ENCODE measurements at regions of chr10 and their contacts with region 1.

Region 1: GRCh38 chr10:101840741-101841453 is 2.7 kb downstream of the KCNIP2 start:
- DNase-seq: peak; percentile 87
- ATAC-seq: peak; percentile 72

Region 2: GRCh38 chr10:101453791-101454718 is 386.8 kb before region 1 on chr10:
- intact Hi-C with region 1: no loop called
- DNase-seq: no peak
- ATAC-seq: no peak

Region 3: GRCh38 chr10:101782811-101783735 is 57.8 kb before region 1 on chr10 and contains the start of gene NPM3:
- intact Hi-C with region 1: no loop called
- DNase-seq: peak; percentile 88
- ATAC-seq: peak; percentile 70
- total RNA-seq, gene NPM3: 5.8 TPM

Region 4: GRCh38 chr10:101879456-101880231 is 38.7 kb after region 1 on chr10:
- intact Hi-C with region 1: loop called (anchors 5 kb)
- DNase-seq: no peak
- ATAC-seq: no peak

Region 5: GRCh38 chr10:101961591-101962498 is 120.9 kb after region 1 on chr10:
- intact Hi-C with region 1: loop called (anchors 10 kb)
- DNase-seq: no peak
- ATAC-seq: peak; percentile 87

Region 6: DNA sequence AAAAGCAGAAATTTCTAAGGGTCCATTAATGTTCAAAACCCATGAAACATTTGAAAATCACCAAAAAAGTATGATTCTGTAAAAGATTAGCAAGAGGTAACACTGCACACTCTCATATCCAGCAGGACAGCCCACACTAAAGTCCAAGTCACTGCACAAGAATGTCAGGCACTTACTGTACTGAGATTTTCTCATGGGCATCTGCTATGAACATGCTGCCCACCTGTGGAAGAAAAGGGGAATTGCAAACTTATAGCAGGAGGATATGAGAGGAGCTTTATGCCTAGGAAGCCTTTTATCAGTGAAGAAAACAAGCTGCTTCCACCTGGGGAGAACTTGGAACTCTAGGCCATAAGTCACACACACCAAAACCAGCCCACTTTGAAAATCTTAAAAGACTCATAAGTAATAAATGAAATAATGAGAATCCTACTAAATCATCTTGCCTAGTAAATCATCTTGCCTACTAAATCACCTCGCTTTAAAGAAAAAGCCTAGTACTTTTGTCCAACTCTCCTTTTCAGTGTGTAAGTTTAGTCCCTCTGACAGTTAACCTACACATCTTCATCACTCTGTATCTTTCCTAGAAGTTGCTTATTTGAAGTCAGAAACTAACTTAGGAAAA is 169.0 kb after region 1 on chr10:
- intact Hi-C with region 1: loop called (anchors 2 kb)
- DNase-seq: no peak
- ATAC-seq: peak; percentile 92

Measured in Right ventricle myocardium superior (tissue), 1 donor.